Dendritic cell treated with granulocyte-macrophage colony-stimulating factor and Interleukin-4, amounts not matched to agents 40 ng/mL and 50 ng/mL, for 4 days (primary cell): ENCODE measurements at regions of chr12 and their contacts with region 1.

Region 1: DNA sequence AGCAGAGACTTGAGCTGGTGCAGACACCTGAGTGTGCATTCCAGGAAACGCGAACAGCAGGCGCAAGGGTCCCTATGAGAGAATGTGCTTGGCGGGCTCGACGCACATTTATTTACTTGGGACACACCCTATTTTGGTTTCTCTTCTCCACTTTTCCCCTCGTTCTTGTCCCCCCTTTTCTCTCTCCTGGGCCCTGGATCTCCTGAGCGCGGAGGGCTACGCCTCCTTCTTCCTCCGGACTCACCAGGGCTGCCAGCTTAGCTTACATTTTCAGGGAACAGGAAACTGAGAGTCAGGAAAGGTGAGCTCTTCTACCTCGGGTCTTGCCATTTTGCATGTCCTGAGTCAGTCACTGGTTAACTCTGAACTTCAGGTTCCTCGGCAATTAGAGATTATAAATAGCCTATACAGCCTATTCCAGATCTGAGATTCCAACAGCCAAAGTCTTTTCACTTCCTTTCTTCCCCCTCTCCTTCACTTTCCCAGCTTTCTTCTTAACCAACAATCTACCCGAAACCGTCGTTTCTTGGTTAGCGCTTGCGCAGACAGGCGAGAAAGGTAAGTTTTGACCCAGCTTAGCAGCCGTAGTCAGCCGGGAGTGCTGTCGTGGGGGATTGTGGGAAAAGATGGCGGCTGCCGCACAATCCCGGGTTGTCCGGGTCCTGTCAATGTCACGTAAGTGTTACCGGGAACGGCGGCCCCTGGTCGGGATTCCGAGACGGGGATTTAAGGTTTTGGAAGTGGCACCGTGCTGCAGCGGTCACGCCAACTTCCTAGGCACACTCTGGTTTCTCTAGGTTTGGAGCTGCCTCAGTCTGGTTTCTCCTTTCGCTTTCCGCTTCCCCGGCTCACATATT is at the starts of genes AKAP3 and NDUFA9:
- H3K4me3 Mint-ChIP-seq: peak within 1 kb of the TSS; percentile 100
- H3K27ac Mint-ChIP-seq: peak within 1 kb of the TSS; percentile 99
- H3K4me1 Mint-ChIP-seq: peaks cover 48% of the 10 kb centered on the region
- H3K27me3 Mint-ChIP-seq: peaks cover 11% of the 10 kb centered on the region

Region 2: GRCh38 chr12:4538207-4539160 is 110.2 kb before region 1 on chr12 and contains the start of gene RAD51AP1:
- intact Hi-C with region 1: loop called (anchors 10 kb)
- H3K4me3 Mint-ChIP-seq: peak within 1 kb of the TSS; percentile 92
- H3K27ac Mint-ChIP-seq: peak within 1 kb of the TSS; percentile 96
- H3K4me1 Mint-ChIP-seq: peaks cover 21% of the 10 kb centered on the region
- H3K27me3 Mint-ChIP-seq: no peaks in the 10 kb centered on the region

Region 3: DNA sequence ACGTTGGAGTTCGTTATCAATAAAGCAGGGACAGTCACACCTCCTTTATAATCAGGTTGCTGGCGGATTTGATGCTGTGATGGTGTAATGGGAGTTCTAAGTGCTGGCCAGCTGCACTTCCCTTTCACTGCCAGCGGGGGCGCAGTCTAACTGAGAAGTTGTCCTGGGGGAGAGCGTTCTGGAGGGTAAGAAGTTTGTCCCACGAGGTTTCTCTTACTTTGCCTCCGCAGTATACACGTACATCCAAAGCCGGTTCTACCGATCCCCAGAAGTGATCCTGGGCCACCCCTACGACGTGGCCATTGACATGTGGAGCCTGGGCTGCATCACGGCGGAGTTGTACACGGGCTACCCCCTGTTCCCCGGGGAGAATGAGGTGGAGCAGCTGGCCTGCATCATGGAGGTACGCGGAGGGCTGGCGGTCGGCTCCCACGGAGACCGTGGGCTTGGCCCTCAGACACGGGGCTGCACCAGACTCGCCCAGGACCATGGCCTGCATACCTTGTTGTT is 44.0 kb before region 1 on chr12:
- intact Hi-C with region 1: loop called (anchors 5 kb)
- H3K4me3 Mint-ChIP-seq: peak overlapping the region; percentile 98
- H3K27ac Mint-ChIP-seq: peak overlapping the region; percentile 88
- H3K4me1 Mint-ChIP-seq: peaks cover 6% of the 10 kb centered on the region
- H3K27me3 Mint-ChIP-seq: peaks cover 5% of the 10 kb centered on the region

Region 4: GRCh38 chr12:4736061-4736460 is 87.3 kb after region 1 on chr12:
- intact Hi-C with region 1: no loop called
- H3K4me3 Mint-ChIP-seq: no peak overlapping the region
- H3K27ac Mint-ChIP-seq: no peak overlapping the region
- H3K4me1 Mint-ChIP-seq: no peaks in the 10 kb centered on the region
- H3K27me3 Mint-ChIP-seq: peaks cover 25% of the 10 kb centered on the region